CD4-positive, alpha-beta T cell (primary cell): ENCODE measurements at regions of chr11 and their contacts with region 1.

Region 1: DNA sequence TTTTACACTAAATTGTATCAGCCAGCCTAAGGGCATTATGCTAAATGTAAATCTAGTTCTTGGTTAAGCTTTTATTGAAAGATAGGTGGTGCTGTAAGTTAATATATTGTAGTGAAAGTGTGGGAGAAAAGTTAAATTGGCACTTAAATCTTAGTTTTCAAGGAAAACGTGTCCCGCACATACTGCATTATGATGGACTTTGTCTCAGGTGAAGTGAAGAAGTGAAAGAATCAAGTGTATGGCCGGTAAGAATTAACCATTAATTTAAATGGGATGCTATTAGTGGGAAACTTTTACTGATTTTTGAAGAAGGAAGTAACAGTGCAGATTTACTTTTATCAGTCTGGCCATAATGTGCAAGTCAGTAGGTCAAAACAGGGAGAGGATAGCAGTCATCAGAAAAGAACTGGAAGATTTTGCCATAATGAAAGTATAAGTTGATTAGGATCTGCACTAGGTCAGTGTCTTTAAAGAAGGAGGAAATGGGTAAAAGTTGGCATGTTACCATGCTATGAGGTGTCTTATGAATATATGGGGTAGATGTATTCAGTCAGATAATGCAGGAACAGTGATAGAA is 81.6 kb downstream of the PDHX start:
- DNase-seq: peak in 3 of 14 experiments; percentile 42 to 56 (median 55)
- ATAC-seq: peak; percentile 64
- H3K4me3 ChIP-seq: no peak overlapping the region
- H3K4me3 Mint-ChIP-seq: peak overlapping the region; percentile 39
- H3K27ac ChIP-seq: no peak overlapping the region
- H3K27ac Mint-ChIP-seq: peak overlapping the region; percentile 48
- H3K4me1 ChIP-seq: no peaks in the 10 kb centered on the region
- H3K4me1 Mint-ChIP-seq: peaks cover 37% of the 10 kb centered on the region
- H3K27me3 ChIP-seq: no peaks in the 10 kb centered on the region
- H3K27me3 Mint-ChIP-seq: no peaks in the 10 kb centered on the region
- CTCF ChIP-seq: peak; percentile 94

Region 2: DNA sequence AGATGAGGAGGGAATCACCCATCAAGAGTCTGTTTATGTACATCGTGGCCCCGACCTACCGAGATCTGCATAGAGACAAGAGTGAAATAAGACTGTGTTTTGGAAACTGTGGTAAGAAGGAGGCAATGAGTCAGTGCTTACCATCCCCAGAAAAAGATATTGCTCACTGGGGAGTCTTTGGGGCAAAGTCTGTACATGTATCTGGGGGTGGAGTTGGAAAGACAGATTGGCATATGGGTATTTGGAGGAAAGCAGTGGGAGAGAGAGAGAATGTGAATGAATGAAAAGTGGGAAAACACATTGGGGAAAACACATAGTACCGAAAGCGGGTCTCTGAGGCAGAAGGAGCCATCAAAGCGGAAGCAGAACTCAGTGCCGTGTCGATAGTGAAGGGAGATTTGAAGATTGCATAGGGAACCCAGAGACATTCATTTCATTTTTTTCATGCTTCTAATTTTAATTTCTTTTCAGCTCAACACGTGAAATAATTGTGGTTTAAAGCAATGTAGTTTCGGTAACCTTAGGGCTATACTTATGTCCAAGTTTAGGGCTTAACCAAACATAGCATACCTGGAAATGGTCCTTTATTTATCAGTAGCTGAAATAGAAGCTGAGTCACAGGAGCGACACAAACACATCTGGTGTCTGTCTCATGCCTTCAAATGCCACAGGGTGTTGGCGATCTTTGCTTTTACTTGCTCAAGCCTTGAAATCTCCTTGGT is 42.3 kb after region 1 on chr11:
- CTCF ChIA-PET with region 1: interaction called, 5 read pairs
- POLR2A ChIA-PET with region 1: interaction called, 5 read pairs
- intact Hi-C with region 1: loop called in 1 of 2 experiments (anchors 2 kb)
- DNase-seq: peak; percentile 37 to 92 (median 57)
- ATAC-seq: peak; percentile 79
- H3K4me3 ChIP-seq: peak overlapping the region; percentile 55
- H3K4me3 Mint-ChIP-seq: peak overlapping the region; percentile 81
- H3K27ac ChIP-seq: peak overlapping the region; percentile 84 to 88
- H3K27ac Mint-ChIP-seq: peak overlapping the region; percentile 92
- H3K4me1 ChIP-seq: peaks cover 43% of the 10 kb centered on the region
- H3K4me1 Mint-ChIP-seq: peaks cover 72% of the 10 kb centered on the region
- H3K27me3 ChIP-seq: no peaks in the 10 kb centered on the region
- H3K27me3 Mint-ChIP-seq: no peaks in the 10 kb centered on the region
- CTCF ChIP-seq: no peak

Region 3: DNA sequence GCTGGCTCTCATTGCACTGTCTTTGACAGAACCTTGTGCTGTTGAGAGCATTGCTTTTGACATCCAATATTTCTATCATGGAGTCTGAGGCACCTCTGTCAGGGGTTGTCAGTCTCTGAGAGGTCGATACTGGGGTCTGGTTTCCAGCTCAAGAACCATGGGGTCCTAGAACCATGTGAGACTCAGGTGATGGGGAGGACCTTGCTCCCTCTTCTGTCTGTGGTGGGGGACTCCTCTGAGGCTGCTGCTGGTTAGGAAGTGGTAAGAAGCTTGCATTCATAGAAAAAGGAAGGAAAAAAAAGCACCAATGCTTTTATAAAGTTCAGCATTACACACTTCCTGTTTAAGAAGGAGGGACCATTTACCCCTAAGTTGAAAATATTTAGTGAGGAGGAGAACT is 49.1 kb after region 1 on chr11:
- CTCF ChIA-PET with region 1: interaction called, 5 read pairs
- POLR2A ChIA-PET with region 1: interaction called, 9 read pairs
- intact Hi-C with region 1: loop called in 1 of 2 experiments (anchors 2 kb)
- DNase-seq: peak; percentile 27 to 91 (median 46)
- ATAC-seq: peak; percentile 70
- H3K4me3 ChIP-seq: no peak overlapping the region
- H3K4me3 Mint-ChIP-seq: peak overlapping the region; percentile 83
- H3K27ac ChIP-seq: peak overlapping the region; percentile 93 to 96
- H3K27ac Mint-ChIP-seq: peak overlapping the region; percentile 92
- H3K4me1 ChIP-seq: peaks cover 83% of the 10 kb centered on the region
- H3K4me1 Mint-ChIP-seq: peaks cover 98% of the 10 kb centered on the region
- H3K27me3 ChIP-seq: no peaks in the 10 kb centered on the region
- H3K27me3 Mint-ChIP-seq: no peaks in the 10 kb centered on the region
- CTCF ChIP-seq: no peak

Region 4: GRCh38 chr11:35182317-35182939 is 184.4 kb after region 1 on chr11:
- CTCF ChIA-PET with region 1: no interaction called
- POLR2A ChIA-PET with region 1: interaction called, 3 read pairs
- intact Hi-C with region 1: loop called in 1 of 2 experiments (anchors 5 kb)
- DNase-seq: no peak
- ATAC-seq: no peak
- H3K4me3 ChIP-seq: no peak overlapping the region
- H3K4me3 Mint-ChIP-seq: peak overlapping the region; percentile 69
- H3K27ac ChIP-seq: peak overlapping the region in 1 of 2 donors; percentile 24
- H3K27ac Mint-ChIP-seq: peak overlapping the region; percentile 80
- H3K4me1 ChIP-seq: peaks cover 56% of the 10 kb centered on the region
- H3K4me1 Mint-ChIP-seq: peaks cover 97% of the 10 kb centered on the region
- H3K27me3 ChIP-seq: no peaks in the 10 kb centered on the region
- H3K27me3 Mint-ChIP-seq: no peaks in the 10 kb centered on the region
- CTCF ChIP-seq: no peak

Region 5: GRCh38 chr11:35237860-35238715 is 240.0 kb after region 1 on chr11:
- CTCF ChIA-PET with region 1: no interaction called
- POLR2A ChIA-PET with region 1: no interaction called
- intact Hi-C with region 1: loop called (anchors 1 to 2 kb)
- DNase-seq: peak in 8 of 14 experiments; percentile 23 to 83 (median 50)
- ATAC-seq: no peak
- H3K4me3 ChIP-seq: no peak overlapping the region
- H3K4me3 Mint-ChIP-seq: peak overlapping the region; percentile 39
- H3K27ac ChIP-seq: no peak overlapping the region
- H3K27ac Mint-ChIP-seq: peak overlapping the region; percentile 77
- H3K4me1 ChIP-seq: peaks cover 47% of the 10 kb centered on the region
- H3K4me1 Mint-ChIP-seq: peaks cover 85% of the 10 kb centered on the region
- H3K27me3 ChIP-seq: no peaks in the 10 kb centered on the region
- H3K27me3 Mint-ChIP-seq: no peaks in the 10 kb centered on the region
- CTCF ChIP-seq: peak; percentile 74

Region 6: GRCh38 chr11:35305670-35306382 is 307.8 kb after region 1 on chr11:
- CTCF ChIA-PET with region 1: interaction called, 3 read pairs
- POLR2A ChIA-PET with region 1: no interaction called
- intact Hi-C with region 1: loop called (anchors 1 to 2 kb)
- DNase-seq: peak; percentile 23 to 78 (median 32)
- ATAC-seq: peak; percentile 77
- H3K4me3 ChIP-seq: no peak overlapping the region
- H3K4me3 Mint-ChIP-seq: peak overlapping the region; percentile 65
- H3K27ac ChIP-seq: no peak overlapping the region
- H3K27ac Mint-ChIP-seq: peak overlapping the region; percentile 4
- H3K4me1 ChIP-seq: peaks cover 28% of the 10 kb centered on the region
- H3K4me1 Mint-ChIP-seq: peaks cover 26% of the 10 kb centered on the region
- H3K27me3 ChIP-seq: no peaks in the 10 kb centered on the region
- H3K27me3 Mint-ChIP-seq: no peaks in the 10 kb centered on the region
- CTCF ChIP-seq: peak; percentile 76